Heart right ventricle (tissue), 16 donors: ENCODE measurements at regions of chr18 and their contacts with region 1.

Region 1: GRCh38 chr18:1875219-1875618 is 696.1 kb downstream of the METTL4 start:
- DNase-seq: no peak
- ATAC-seq: no peak
- H3K4me3 ChIP-seq: no peak overlapping the region
- H3K27ac ChIP-seq: no peak overlapping the region
- H3K4me1 ChIP-seq: no peaks in the 10 kb centered on the region
- H3K27me3 ChIP-seq: no peaks in the 10 kb centered on the region
- CTCF ChIP-seq: no peak

Region 2: DNA sequence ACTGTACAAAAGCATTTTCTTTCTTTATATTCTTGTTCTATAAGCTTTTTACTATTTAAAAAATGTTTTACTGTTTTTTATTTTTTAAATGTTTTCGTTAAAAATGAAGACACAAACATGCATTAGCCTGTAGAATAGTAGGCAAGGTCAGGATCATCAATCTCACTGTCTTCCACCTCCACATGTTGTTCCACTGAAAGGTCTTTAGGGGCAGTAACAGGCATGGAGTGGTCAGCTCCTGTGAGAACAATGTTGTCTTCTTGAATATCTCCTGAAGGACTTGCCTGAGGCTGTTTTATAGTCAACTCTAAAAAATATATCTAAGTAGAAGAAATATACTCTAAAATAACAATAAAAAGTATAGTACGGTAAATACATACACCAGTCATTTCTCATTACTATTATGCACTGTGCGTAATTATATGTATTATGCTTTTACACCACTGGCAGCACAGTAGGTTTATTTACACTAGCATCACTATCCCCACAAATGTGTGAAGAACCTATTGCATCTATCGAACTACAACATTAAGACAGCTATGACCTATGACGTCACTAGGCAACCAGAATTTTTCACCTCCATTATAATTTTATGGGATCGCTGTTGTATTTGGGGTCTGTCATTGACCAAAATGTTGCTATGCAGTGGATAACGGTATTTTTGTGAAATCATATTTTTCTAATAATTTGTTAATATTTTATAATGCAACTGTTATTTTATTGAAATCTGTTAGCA is 68.2 kb before region 1 on chr18:
- intact Hi-C with region 1: no loop called
- DNase-seq: no peak
- ATAC-seq: no peak
- H3K4me3 ChIP-seq: no peak overlapping the region
- H3K27ac ChIP-seq: no peak overlapping the region
- H3K4me1 ChIP-seq: no peaks in the 10 kb centered on the region
- H3K27me3 ChIP-seq: no peaks in the 10 kb centered on the region
- CTCF ChIP-seq: no peak

Region 3: GRCh38 chr18:1906420-1906819 is 31.2 kb after region 1 on chr18:
- intact Hi-C with region 1: loop called in 1 of 10 experiments (anchors 2 kb)
- DNase-seq: no peak
- ATAC-seq: no peak
- H3K4me3 ChIP-seq: no peak overlapping the region
- H3K27ac ChIP-seq: no peak overlapping the region
- H3K4me1 ChIP-seq: no peaks in the 10 kb centered on the region
- H3K27me3 ChIP-seq: no peaks in the 10 kb centered on the region
- CTCF ChIP-seq: no peak